ENCODE measurements at regions of chr19 and their contacts with region 1.

Region 1: GRCh38 chr19:5577785-5578493 is 10.2 kb upstream of the TINCR start:
- DNase-seq: no peak
- H3K4me3 ChIP-seq: no peak overlapping the region
- H3K27ac ChIP-seq: no peak overlapping the region
- H3K4me1 ChIP-seq: no peaks in the 10 kb centered on the region
- H3K27me3 ChIP-seq: no peaks in the 10 kb centered on the region
- CTCF ChIP-seq: peak; percentile 86 to 99 (median 99)

Region 2: DNA sequence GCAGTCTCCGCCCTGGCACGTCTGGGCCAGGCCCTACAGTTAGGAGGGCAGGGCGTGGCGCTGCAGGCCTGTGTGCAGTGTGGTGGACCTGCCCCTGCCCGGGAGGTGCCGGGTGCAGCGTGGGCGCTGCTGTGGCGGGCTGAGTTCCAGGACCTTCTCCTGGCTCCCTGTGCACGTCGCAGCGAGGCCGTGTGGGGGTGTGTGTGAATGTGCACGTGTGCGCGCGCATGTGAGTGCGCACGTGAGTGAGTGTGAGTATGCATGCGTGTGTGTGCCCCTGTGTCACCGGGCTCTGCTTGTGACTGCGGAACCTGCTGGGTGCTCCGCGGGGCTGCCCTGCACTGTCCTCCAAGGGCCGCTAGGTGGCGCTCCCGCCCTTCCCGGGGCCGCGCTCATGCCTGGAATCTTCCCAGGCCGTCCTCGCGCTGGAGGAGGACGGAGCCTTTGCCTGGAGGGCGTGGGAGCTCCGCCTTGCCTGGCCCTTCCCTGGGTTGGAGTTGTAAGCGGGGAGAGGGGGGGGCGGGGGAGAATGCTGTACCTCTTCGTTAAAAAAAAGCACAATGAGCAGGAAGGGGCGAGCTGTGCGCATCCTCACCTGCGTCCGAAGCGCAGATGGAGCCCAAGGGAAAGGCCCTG is 529.7 kb before region 1 on chr19:
- intact Hi-C with region 1: loop called (anchors 1 kb)
- DNase-seq: peak; percentile 13 to 89
- H3K4me3 ChIP-seq: peak overlapping the region; percentile 31 to 44
- H3K27ac ChIP-seq: peak overlapping the region in 1 of 2 donors; percentile 53
- H3K4me1 ChIP-seq: peaks cover 22 to 30% of the 10 kb centered on the region in 2 donors
- H3K27me3 ChIP-seq: no peaks in the 10 kb centered on the region
- CTCF ChIP-seq: peak; percentile 97 to 99 (median 99)

Measured in ascending aorta (tissue), 2 donors.